HepG2 (cell line): ENCODE measurements at regions of chr14 and their contacts with region 1.

Region 1: DNA sequence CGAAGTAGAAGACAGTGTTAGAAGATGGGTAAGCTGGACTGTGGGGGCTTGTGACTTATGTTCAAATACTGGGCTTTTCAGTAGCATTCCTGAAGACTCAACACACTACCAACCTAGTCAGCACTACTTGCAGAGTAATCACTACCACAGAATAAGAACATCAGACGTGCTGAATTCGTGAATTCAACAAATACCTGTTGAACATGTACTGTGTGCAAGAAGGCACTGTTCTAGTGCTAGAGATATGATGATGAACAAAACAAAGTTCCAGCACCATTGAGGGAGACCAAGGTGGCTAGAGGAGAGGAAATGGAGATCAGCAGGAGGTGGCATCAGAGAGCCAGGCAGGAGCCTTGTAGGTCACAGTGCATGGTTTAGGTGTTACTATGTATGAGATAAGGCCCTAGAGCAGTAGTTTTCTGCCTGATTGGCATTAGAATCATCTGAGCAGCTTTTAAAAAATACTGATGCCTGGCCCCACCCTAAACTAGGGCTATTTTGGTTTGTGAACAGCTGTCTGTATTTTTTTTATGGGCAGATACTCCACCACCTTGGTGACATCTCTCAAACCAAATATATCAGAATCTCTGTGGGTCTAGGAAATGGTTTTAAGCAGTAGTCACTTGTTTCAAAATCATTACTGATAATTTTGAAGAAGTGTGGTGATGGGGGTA is 26.8 kb downstream of the FERMT2 start:
- DNase-seq: peak; percentile 43
- ATAC-seq: peak; percentile 77
- H3K4me3 ChIP-seq: no peak overlapping the region
- H3K27ac ChIP-seq: no peak overlapping the region
- H3K4me1 ChIP-seq: peaks cover 96% of the 10 kb centered on the region
- H3K27me3 ChIP-seq: no peaks in the 10 kb centered on the region
- CTCF ChIP-seq: peak; percentile 80
- EP300 ChIP-seq: no peak
- POLR2A ChIP-seq: no peak
- RAD21 ChIP-seq: peak; percentile 63

Region 2: DNA sequence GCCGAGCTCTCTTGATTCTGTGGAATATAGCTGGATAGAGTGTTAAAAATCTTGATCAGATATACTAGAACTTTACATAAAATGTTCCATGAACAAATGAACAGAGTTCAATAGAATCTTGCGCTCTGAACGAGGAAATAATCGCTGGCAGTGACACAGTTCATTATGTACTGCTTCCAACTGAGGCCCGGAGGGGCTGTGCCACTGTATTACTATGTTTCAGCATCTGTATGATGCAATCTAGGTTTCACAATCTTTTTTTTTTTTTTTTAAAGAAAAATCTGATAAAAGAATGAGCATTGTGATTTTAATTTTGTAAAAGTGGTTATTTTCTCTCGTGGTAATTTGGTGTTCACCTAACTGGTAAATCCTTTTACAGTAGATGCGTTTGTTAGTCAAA is 50.3 kb before region 1 on chr14:
- CTCF ChIA-PET with region 1: no interaction called
- POLR2A ChIA-PET with region 1: no interaction called
- in situ Hi-C with region 1: no loop called
- intact Hi-C with region 1: no loop called
- DNase-seq: no peak
- ATAC-seq: no peak
- H3K4me3 ChIP-seq: no peak overlapping the region
- H3K27ac ChIP-seq: no peak overlapping the region
- H3K4me1 ChIP-seq: no peaks in the 10 kb centered on the region
- H3K27me3 ChIP-seq: no peaks in the 10 kb centered on the region
- CTCF ChIP-seq: no peak
- EP300 ChIP-seq: no peak
- POLR2A ChIP-seq: no peak
- RAD21 ChIP-seq: no peak

Region 3: GRCh38 chr14:52910572-52910971 is 13.5 kb before region 1 on chr14:
- CTCF ChIA-PET with region 1: no interaction called
- POLR2A ChIA-PET with region 1: no interaction called
- in situ Hi-C with region 1: no loop called
- intact Hi-C with region 1: loop called (anchors 1 kb)
- DNase-seq: no peak
- ATAC-seq: no peak
- H3K4me3 ChIP-seq: no peak overlapping the region
- H3K27ac ChIP-seq: no peak overlapping the region
- H3K4me1 ChIP-seq: no peaks in the 10 kb centered on the region
- H3K27me3 ChIP-seq: no peaks in the 10 kb centered on the region
- CTCF ChIP-seq: no peak
- EP300 ChIP-seq: no peak
- POLR2A ChIP-seq: no peak
- RAD21 ChIP-seq: no peak

Region 4: GRCh38 chr14:52950898-52951689 is 27.1 kb after region 1 on chr14 and contains the start of gene FERMT2:
- CTCF ChIA-PET with region 1: no interaction called
- POLR2A ChIA-PET with region 1: interaction called, 22 read pairs
- in situ Hi-C with region 1: no loop called
- intact Hi-C with region 1: no loop called
- DNase-seq: peak; percentile 79
- ATAC-seq: peak; percentile 92
- H3K4me3 ChIP-seq: peak within 1 kb of the TSS; percentile 85 to 95 (median 92)
- H3K27ac ChIP-seq: peak within 1 kb of the TSS; percentile 96
- H3K4me1 ChIP-seq: peaks cover 52% of the 10 kb centered on the region
- H3K27me3 ChIP-seq: no peaks in the 10 kb centered on the region; a peak in 1 of 5 replicates
- CTCF ChIP-seq: no peak; the same call in 1 of the 2 replicates
- EP300 ChIP-seq: no peak
- POLR2A ChIP-seq: peak; percentile 57 to 85
- RAD21 ChIP-seq: peak; percentile 65
- total RNA-seq, gene FERMT2: 60.4 and 86.5 TPM in 2 replicates